PC-9 (cell line): ENCODE measurements at regions of chr12 and their contacts with region 1.

Region 1: GRCh38 chr12:64088431-64089349 is 133.4 kb downstream of the KICS2 start:
- DNase-seq: peak; percentile 71 to 94
- H3K4me3 ChIP-seq: peak overlapping the region; percentile 48; the same call in 1 of the 2 replicates
- H3K27ac ChIP-seq: peak overlapping the region; percentile 89
- H3K4me1 ChIP-seq: peaks cover 40% of the 10 kb centered on the region
- H3K27me3 ChIP-seq: no peaks in the 10 kb centered on the region
- CTCF ChIP-seq: no peak

Region 2: DNA sequence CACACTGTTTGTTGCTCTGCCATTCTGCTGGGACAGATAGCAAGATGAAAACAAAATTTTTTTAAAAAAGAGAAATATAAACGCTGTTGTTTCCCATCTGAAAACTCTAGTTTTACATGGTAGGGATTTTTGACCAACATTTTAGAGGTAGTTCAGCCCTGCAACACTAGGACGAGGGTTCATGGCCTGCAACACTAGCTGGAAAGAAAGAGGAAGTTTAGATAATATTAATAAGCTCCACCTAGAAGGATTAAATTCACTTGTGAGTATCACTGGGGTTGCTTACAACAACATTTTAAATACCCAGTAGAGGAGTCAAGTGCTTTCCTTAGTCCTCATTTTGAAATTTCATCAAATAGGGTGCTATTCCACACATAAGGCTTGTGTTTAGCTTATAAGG is 176.0 kb before region 1 on chr12:
- CTCF ChIA-PET with region 1: no interaction called
- POLR2A ChIA-PET with region 1: interaction called, 23 read pairs
- intact Hi-C with region 1: no loop called
- DNase-seq: no peak
- H3K4me3 ChIP-seq: no peak overlapping the region
- H3K27ac ChIP-seq: no peak overlapping the region
- H3K4me1 ChIP-seq: peaks cover 42% of the 10 kb centered on the region
- H3K27me3 ChIP-seq: no peaks in the 10 kb centered on the region
- CTCF ChIP-seq: no peak

Region 3: GRCh38 chr12:63989301-63989845 is 99.3 kb before region 1 on chr12:
- CTCF ChIA-PET with region 1: interaction called, 10 read pairs
- POLR2A ChIA-PET with region 1: no interaction called
- intact Hi-C with region 1: no loop called
- DNase-seq: no peak
- H3K4me3 ChIP-seq: no peak overlapping the region
- H3K27ac ChIP-seq: no peak overlapping the region
- H3K4me1 ChIP-seq: no peaks in the 10 kb centered on the region
- H3K27me3 ChIP-seq: no peaks in the 10 kb centered on the region
- CTCF ChIP-seq: no peak

Region 4: GRCh38 chr12:64181504-64182291 is 93.0 kb after region 1 on chr12:
- CTCF ChIA-PET with region 1: no interaction called
- POLR2A ChIA-PET with region 1: no interaction called
- intact Hi-C with region 1: loop called (anchors 5 kb)
- DNase-seq: peak; percentile 58 to 96
- H3K4me3 ChIP-seq: peak overlapping the region; percentile 3; the same call in 1 of the 2 replicates
- H3K27ac ChIP-seq: peak overlapping the region; percentile 79
- H3K4me1 ChIP-seq: peaks cover 50% of the 10 kb centered on the region
- H3K27me3 ChIP-seq: no peaks in the 10 kb centered on the region
- CTCF ChIP-seq: peak; percentile 51; the same call in 1 of the 2 replicates

Region 5: GRCh38 chr12:64222009-64222765 is 133.5 kb after region 1 on chr12 and contains the start of gene KICS2:
- CTCF ChIA-PET with region 1: no interaction called
- POLR2A ChIA-PET with region 1: interaction called, 5 read pairs
- intact Hi-C with region 1: loop called (anchors 5 kb)
- DNase-seq: peak; percentile 80 to 93
- H3K4me3 ChIP-seq: peak within 1 kb of the TSS; percentile 73
- H3K27ac ChIP-seq: peak within 1 kb of the TSS; percentile 89
- H3K4me1 ChIP-seq: peaks cover 29% of the 10 kb centered on the region
- H3K27me3 ChIP-seq: no peaks in the 10 kb centered on the region
- CTCF ChIP-seq: no peak
- total RNA-seq, gene KICS2: 12.1 and 14.5 TPM in 2 replicates